ENCODE measurements at regions of chr20 and their contacts with region 1.

Region 1: DNA sequence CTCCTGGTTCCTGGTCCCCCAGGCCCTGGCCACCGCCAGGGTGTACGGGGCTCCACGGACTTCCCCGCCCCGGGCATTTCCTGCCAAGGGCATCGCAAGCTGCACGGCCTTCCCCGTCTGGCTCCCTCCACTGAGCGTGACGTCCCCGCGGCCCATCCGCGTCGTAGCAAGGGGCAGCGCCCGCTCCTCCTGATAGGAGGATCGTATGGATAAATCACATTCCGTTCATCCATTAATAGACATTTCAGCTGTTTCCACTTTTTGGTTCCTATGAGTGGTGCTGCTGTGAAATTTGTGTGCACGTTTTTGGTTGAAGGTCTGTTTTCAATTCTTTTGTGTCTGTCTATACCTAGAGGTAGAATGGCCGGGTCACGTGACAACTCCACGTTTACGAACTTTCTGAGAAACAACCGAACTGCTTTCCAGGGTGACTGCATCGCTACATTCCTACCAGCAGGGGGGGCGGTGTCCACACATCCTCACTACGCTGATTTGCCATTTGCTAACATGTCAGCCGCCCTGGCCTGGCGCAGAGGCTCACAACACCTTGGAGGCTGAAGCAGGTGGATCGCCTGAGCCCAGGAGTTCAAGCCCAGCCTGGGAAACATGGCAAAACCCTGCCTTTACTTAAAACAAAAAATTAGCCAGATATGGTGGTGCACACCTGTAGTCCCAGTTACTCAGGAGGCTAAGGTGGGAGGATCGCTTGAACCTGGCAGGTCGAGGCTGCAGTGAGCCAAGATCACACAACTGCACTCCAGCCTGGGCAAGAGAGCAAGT is 37.7 kb downstream of the KCNQ2 start:
- DNase-seq: peak in 1 of 5 donors; percentile 54
- H3K4me3 ChIP-seq: no peak overlapping the region
- H3K27ac ChIP-seq: no peak overlapping the region
- H3K4me1 ChIP-seq: no peaks in the 10 kb centered on the region
- H3K27me3 ChIP-seq: no peaks in the 10 kb centered on the region
- CTCF ChIP-seq: peak in 1 of 3 donors; percentile 26
- EP300 ChIP-seq: no peak
- POLR2A ChIP-seq: no peak

Region 2: DNA sequence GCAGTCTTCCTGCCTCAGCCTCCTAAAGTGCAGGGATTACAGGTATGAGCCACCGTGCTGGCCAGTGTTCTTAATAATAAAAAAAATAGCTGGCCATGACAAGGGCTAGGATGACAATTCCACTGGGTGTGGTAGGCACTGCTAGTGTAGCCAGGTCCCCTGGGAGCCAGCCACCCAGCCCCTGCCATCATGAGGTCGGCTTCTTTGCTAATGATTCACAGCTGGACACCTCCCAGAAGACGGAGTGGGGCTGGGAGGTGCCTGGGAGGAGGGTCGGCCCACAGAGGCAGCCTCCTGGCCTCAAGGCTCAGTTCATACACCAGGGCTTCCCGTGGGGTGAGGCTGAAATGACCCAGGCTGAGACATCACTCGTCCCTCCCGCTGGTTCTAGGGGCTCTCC is 1599.5 kb before region 1 on chr20:
- intact Hi-C with region 1: loop called in 1 of 4 experiments (anchors 10 kb)
- DNase-seq: no peak
- H3K4me3 ChIP-seq: no peak overlapping the region
- H3K27ac ChIP-seq: no peak overlapping the region
- H3K4me1 ChIP-seq: no peaks in the 10 kb centered on the region
- H3K27me3 ChIP-seq: no peaks in the 10 kb centered on the region
- CTCF ChIP-seq: no peak
- EP300 ChIP-seq: no peak
- POLR2A ChIP-seq: no peak

Measured in ovary (tissue), 10 donors.